Activated T-helper 2 cell treated with anti-CD3 and anti-CD28 coated beads, Interferon-gamma antibody, Interleukin-2, Interleukin-4, amounts not matched to agents 10 μg/mL and 5 μg/mL and 100 μg/mL, durations not matched to agents 14 hours and 24 hours and 36 hours (primary cell): ENCODE measurements at regions of chr5 and their contacts with region 1.

Region 1: GRCh38 chr5:178204182-178204894 is at the start of gene HNRNPAB:
- DNase-seq: peak; percentile 94
- H3K4me3 Mint-ChIP-seq: peak within 1 kb of the TSS; percentile 95
- H3K27ac Mint-ChIP-seq: peak within 1 kb of the TSS; percentile 98
- H3K4me1 Mint-ChIP-seq: peaks cover 23% of the 10 kb centered on the region
- H3K27me3 Mint-ChIP-seq: peaks cover 2% of the 10 kb centered on the region
- total RNA-seq, gene HNRNPAB: 393 and 403 TPM in 2 replicates

Region 2: GRCh38 chr5:177592010-177592834 is 612.1 kb before region 1 on chr5 and contains the start of gene TMED9:
- intact Hi-C with region 1: loop called (anchors 10 kb)
- DNase-seq: peak; percentile 89
- H3K4me3 Mint-ChIP-seq: peak within 1 kb of the TSS; percentile 98
- H3K27ac Mint-ChIP-seq: peak within 1 kb of the TSS; percentile 98
- H3K4me1 Mint-ChIP-seq: peaks cover 18% of the 10 kb centered on the region
- H3K27me3 Mint-ChIP-seq: peaks cover 21% of the 10 kb centered on the region
- total RNA-seq, gene TMED9: 174 and 175 TPM in 2 replicates

Region 3: DNA sequence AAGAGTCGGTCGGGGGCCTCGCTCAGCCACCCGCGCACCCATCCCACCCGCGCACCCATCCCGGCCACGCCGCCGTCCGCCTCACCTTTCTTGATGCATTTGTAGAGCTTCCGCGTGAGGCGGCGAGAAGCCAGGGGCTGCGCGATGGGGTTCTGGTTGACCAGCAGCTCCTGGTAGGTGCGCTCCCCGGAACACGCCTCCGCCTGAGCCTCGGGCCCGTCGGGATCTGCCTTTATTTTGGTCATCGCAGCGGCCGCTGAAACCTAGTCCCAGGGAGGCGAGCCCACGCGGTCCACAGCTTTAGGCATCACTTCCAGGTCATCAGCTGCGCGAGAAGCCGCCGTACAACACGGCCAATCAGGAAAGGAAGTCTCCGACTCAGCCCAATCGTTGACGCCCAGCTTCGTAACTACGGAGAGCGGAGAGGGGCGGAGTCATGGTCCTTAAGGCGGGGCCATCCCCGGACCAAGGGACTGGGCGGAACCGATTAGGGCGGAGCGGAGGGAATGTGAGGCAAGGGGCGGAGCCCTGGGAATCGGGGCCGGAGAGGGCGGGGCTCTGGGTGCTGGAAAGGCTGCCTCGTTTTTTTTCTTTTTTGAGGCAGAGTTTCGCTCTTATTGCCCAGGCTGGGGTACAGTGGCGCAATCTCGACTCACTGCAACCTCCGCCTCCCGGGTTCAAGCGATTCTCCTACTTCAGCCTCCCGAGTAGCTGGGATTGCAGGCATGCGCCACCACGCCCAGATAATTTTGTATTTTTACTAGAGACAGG is 50.6 kb before region 1 on chr5 and contains the start of gene NHP2:
- intact Hi-C with region 1: loop called (anchors 2 kb)
- DNase-seq: peak; percentile 98
- H3K4me3 Mint-ChIP-seq: peak within 1 kb of the TSS; percentile 93
- H3K27ac Mint-ChIP-seq: peak within 1 kb of the TSS; percentile 83
- H3K4me1 Mint-ChIP-seq: peaks cover 29% of the 10 kb centered on the region
- H3K27me3 Mint-ChIP-seq: no peaks in the 10 kb centered on the region
- total RNA-seq, gene NHP2: 221 and 228 TPM in 2 replicates

Region 4: DNA sequence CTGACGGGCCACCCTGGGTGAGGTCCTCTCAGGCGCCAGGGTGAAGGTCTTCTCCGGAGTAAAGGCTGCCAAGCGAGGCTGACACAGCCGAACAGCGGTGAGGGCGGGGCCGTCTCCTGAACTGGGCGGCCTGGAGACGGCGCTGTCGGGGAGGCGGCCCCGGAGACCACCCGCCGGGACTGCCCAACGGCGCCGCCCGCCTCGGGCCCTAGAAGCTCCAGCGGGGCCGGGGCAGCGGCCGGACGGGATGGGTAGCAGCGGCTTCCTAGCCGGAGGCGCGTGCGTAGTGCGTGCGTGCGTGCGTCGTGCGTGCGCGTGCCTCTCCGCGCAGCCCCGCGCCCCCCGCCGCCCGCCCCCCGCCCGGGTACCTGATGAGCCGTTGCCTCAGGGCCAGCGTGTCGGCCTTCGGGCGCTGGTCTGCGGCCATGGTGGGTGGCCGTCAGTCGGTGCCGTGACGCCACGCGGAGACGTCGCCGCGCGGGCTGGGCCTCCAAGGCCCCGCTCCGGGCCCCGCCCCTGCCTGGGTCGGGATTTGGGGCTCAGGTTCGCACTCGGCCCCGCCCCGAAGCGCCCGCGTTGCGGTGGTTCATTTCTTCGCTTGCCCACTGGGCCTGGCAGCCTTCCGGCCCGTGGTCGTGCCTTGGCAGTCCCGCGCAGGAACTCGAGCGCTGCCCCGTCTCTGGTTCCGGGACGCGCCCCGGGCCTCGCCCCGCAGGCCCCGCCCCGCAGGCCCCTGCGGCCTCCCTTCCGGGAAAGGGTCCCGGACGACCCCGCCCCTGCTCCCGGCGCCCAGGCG is 28.0 kb after region 1 on chr5 and contains the start of gene PHYKPL:
- intact Hi-C with region 1: loop called (anchors 2 kb)
- DNase-seq: peak; percentile 69
- H3K4me3 Mint-ChIP-seq: peak within 1 kb of the TSS; percentile 89
- H3K27ac Mint-ChIP-seq: peak within 1 kb of the TSS; percentile 81
- H3K4me1 Mint-ChIP-seq: peaks cover 38% of the 10 kb centered on the region
- H3K27me3 Mint-ChIP-seq: no peaks in the 10 kb centered on the region
- total RNA-seq, gene PHYKPL: 87.4 and 92.0 TPM in 2 replicates

Region 5: GRCh38 chr5:178428341-178428964 is 224.1 kb after region 1 on chr5:
- intact Hi-C with region 1: no loop called
- DNase-seq: no peak
- H3K4me3 Mint-ChIP-seq: no peak overlapping the region
- H3K27ac Mint-ChIP-seq: no peak overlapping the region
- H3K4me1 Mint-ChIP-seq: no peaks in the 10 kb centered on the region
- H3K27me3 Mint-ChIP-seq: no peaks in the 10 kb centered on the region